Activated CD4-positive, alpha-beta T cell treated with anti-CD3 and anti-CD28 coated beads for 36 hours (primary cell): ENCODE measurements at regions of chrX and their contacts with region 1.

Region 1: GRCh38 chrX:155094468-155095061 is 23.3 kb downstream of the BRCC3 start:
- DNase-seq: peak; percentile 26
- ATAC-seq: peak; percentile 73
- H3K4me3 Mint-ChIP-seq: no peak overlapping the region
- H3K27ac Mint-ChIP-seq: no peak overlapping the region
- H3K4me1 Mint-ChIP-seq: peaks cover 2% of the 10 kb centered on the region
- H3K27me3 Mint-ChIP-seq: no peaks in the 10 kb centered on the region

Region 2: DNA sequence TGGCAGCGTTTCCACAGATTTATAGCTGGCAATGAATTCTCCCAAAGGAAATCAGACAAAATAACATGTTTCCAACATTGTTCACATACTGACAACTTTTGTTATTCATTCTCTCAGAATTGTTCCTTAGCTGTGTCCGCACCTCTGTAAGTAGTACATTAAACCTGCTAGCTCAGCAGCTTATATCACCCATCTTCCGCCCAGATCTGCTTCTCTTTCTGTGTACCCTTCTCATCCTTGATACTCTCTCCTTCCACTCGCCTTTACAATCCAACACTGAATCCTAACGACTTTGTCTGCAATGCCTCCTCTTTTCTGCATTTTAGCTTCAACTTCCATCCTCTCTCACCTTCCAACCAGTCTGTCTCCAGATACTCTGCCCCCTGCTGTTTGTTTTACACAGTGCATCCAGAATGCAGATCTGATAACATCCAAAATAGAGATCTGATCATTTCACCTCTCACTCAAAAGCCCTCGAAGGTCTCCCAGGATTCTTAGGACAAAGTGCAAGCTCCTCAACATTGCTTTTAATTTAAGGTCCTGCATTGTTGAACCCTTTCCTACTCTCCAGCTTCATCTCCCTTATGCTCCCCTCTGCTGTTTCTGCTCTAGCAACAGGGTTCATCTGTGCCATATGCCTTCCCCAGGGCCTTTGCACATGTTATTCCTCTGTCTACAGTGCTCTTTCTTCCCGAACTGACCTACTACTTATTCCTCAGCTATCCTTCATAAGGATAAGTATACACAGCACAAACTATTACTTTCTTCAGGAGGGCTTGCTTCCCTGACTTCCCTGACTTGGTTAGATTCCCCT is 54.4 kb after region 1 on chrX:
- CTCF ChIA-PET with region 1: interaction called, 4 read pairs
- POLR2A ChIA-PET with region 1: no interaction called
- intact Hi-C with region 1: loop called in 1 of 2 experiments (anchors 1 kb)
- DNase-seq: peak; percentile 51
- ATAC-seq: peak; percentile 47
- H3K4me3 Mint-ChIP-seq: no peak overlapping the region
- H3K27ac Mint-ChIP-seq: no peak overlapping the region
- H3K4me1 Mint-ChIP-seq: peaks cover 3% of the 10 kb centered on the region
- H3K27me3 Mint-ChIP-seq: no peaks in the 10 kb centered on the region

Region 3: GRCh38 chrX:155179346-155179986 is 84.9 kb after region 1 on chrX:
- CTCF ChIA-PET with region 1: no interaction called
- POLR2A ChIA-PET with region 1: no interaction called
- intact Hi-C with region 1: no loop called
- DNase-seq: no peak
- ATAC-seq: no peak
- H3K4me3 Mint-ChIP-seq: no peak overlapping the region
- H3K27ac Mint-ChIP-seq: no peak overlapping the region
- H3K4me1 Mint-ChIP-seq: no peaks in the 10 kb centered on the region
- H3K27me3 Mint-ChIP-seq: no peaks in the 10 kb centered on the region

Region 4: DNA sequence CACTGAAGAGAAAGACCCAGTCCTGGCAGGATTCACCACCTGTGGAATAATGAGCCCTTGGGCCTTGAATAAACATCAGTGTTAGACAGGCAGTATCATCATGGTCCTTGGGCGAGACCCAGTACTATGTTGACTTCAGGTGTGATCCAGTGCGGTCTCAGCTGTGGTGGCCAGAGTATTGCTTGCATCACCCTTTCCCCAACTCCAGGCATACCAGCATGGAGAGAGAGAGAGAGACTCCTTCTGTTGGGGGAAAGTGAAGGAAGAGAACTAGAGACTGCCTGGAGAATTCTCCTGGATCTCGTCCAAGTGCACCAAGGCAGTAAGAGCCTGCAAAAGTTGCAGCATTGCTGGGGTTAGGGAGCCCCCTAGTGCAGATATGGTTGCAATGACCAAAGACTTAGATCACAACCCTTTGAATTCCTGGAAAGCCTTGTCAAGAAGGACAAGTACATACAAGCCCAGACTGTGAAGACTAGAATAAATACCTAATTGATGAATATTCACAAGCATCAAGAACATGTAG is 725.5 kb after region 1 on chrX:
- CTCF ChIA-PET with region 1: no interaction called
- POLR2A ChIA-PET with region 1: no interaction called
- intact Hi-C with region 1: loop called (anchors 1 to 5 kb)
- DNase-seq: peak; percentile 66
- ATAC-seq: peak; percentile 66
- H3K4me3 Mint-ChIP-seq: no peak overlapping the region
- H3K27ac Mint-ChIP-seq: no peak overlapping the region
- H3K4me1 Mint-ChIP-seq: no peaks in the 10 kb centered on the region
- H3K27me3 Mint-ChIP-seq: peaks cover 7% of the 10 kb centered on the region